Activated CD4-positive, alpha-beta memory T cell treated with anti-CD3 and anti-CD28 coated beads for 36 hours (primary cell): ENCODE measurements at regions of chr10 and their contacts with region 1.

Region 1: DNA sequence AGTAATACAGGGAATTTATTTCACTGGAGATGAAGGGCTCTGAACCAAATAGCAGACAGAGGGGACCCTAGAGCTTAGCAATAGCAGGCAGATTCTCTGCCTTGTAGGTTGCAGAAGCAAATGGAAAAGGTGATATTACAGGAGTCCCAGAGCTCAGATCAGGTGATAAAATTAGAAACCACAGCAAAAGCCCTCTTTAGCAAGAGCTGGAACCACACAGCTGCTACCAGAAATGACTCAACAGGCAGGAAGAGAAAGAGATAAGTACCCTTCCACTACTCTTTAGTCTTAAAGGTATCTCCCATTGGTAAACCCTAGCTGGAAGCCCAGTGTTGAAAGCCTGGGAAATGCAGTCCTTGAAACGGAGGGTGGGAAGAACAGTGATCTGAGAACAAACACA is 535.6 kb upstream of the GHITM start:
- DNase-seq: no peak
- H3K4me3 Mint-ChIP-seq: no peak overlapping the region
- H3K27ac Mint-ChIP-seq: no peak overlapping the region
- H3K4me1 Mint-ChIP-seq: peaks cover 6% of the 10 kb centered on the region
- H3K27me3 Mint-ChIP-seq: no peaks in the 10 kb centered on the region

Region 2: GRCh38 chr10:83680470-83680891 is 76.8 kb after region 1 on chr10:
- CTCF ChIA-PET with region 1: no interaction called
- POLR2A ChIA-PET with region 1: no interaction called
- intact Hi-C with region 1: loop called (anchors 1 kb)
- DNase-seq: peak; percentile 54
- H3K4me3 Mint-ChIP-seq: no peak overlapping the region
- H3K27ac Mint-ChIP-seq: no peak overlapping the region
- H3K4me1 Mint-ChIP-seq: peaks cover 28% of the 10 kb centered on the region
- H3K27me3 Mint-ChIP-seq: no peaks in the 10 kb centered on the region